ENCODE measurements at regions of chr12 and their contacts with region 1.

Region 1: GRCh38 chr12:117874842-117875434 is 93.9 kb downstream of the KSR2 start:
- DNase-seq: peak; percentile 68 to 93 (median 82)

Region 2: GRCh38 chr12:118035246-118036041 is 160.5 kb after region 1 on chr12:
- intact Hi-C with region 1: loop called (anchors 10 kb)
- DNase-seq: peak in 6 of 42 donors; percentile 8 to 63 (median 20)

Region 3: GRCh38 chr12:118264068-118264467 is 389.1 kb after region 1 on chr12:
- intact Hi-C with region 1: no loop called
- DNase-seq: no peak

Measured in head of caudate nucleus (tissue), 42 donors.